CD4-positive, alpha-beta T cell (primary cell): ENCODE measurements at regions of chr12 and their contacts with region 1.

Region 1: DNA sequence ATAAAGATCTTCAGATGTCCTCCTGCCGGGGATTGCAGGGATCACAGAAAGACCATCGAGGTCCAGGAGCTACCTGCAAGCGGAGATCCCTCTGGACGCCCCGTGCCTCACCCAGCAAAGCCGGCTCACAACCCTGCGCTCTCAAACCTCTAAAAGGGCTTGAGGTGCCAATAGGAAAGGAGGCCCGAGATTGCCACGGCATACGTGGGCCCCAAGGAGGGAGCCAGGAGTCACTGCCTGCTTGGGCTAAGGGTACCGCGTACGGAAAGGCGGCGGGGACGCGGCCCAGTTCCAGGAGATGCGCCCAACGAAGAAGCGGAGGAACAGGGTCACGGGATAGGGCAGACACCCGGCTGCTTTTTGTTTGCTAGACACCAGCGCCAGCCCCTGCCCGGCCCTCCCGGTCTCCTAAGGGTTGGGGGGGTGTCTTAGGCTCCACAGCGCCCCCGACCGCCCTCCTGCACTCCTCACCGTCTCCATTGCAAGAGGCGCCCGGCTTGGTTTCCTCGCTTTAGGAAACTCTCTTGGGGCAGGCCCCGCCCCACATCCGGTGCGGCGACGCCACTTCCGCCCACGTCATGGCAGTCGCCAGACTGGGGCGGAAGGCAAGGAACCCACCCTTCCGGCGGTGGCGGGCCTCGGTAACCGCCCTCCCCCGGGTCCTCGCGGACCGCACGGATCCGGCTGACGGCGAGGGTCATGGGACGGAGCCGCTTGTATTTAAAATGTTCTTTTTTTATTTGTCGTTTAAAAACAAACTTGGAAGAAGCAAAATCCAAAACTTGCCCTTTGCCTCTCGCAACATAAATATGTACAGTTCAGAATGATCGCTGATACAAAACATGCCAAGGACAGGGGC is at the start of gene PRKAG1:
- DNase-seq: peak; percentile 94 to 99 (median 96)
- ATAC-seq: peak; percentile 90
- H3K4me3 ChIP-seq: peak within 1 kb of the TSS; percentile 73
- H3K4me3 Mint-ChIP-seq: peak within 1 kb of the TSS; percentile 97
- H3K27ac ChIP-seq: peak within 1 kb of the TSS; percentile 94 to 97
- H3K27ac Mint-ChIP-seq: peak within 1 kb of the TSS; percentile 99
- H3K4me1 ChIP-seq: peaks cover 27% of the 10 kb centered on the region
- H3K4me1 Mint-ChIP-seq: peaks cover 50% of the 10 kb centered on the region
- H3K27me3 ChIP-seq: no peaks in the 10 kb centered on the region
- H3K27me3 Mint-ChIP-seq: no peaks in the 10 kb centered on the region
- CTCF ChIP-seq: peak; percentile 60
- total RNA-seq, gene PRKAG1: 34.6 to 38.2 TPM

Region 2: DNA sequence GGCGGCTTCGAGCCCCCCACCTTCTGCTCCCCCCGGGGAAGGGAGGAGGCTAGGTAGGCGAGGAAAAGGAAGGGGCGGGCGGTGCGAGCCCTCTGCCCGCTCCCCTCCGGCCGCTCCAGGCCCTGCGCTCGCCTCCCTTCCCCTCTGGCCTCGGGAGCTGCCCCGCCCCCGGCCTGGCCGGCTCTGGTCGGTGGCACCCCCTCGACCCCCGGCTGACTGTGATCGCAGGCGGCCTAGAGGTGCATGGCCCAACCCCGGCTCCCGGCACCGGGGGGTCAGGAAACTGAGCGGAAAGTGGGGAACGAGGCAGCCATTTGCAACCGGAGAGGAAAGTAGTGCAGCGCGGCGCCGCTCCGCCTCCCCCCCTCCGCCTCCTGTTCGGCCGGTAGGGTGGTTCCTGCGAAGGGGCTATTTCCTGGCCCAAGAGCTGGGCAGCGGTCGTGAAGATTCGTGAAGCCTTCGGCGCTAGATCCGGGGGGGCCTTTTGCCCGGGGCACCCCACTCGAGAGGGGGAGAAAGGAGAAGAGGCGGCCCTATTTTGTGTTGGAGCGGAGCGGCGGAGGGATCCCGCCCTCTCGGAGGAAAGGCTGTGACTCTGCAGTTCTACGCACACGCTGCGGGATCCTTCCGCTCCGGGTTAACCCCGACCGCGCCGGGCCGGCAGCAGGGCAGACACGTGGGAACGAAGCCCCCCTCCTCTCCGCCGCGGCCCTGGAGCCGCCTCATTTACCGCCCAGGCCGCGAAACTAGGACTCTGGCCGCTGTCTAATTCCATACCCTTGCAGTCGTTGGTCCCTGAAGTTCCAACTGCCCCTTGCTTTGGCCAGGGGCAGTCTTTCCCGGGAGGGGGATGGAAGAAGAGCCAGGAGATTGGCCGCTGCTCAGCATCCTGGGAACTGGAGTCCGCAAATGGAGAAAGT is 42.0 kb after region 1 on chr12 and contains the start of gene KMT2D:
- CTCF ChIA-PET with region 1: interaction called, 4 read pairs
- POLR2A ChIA-PET with region 1: interaction called, 4 read pairs
- intact Hi-C with region 1: loop called (anchors 2 kb)
- DNase-seq: peak; percentile 78 to 95 (median 86)
- ATAC-seq: peak; percentile 68
- H3K4me3 ChIP-seq: peak within 1 kb of the TSS; percentile 96
- H3K4me3 Mint-ChIP-seq: peak within 1 kb of the TSS; percentile 97
- H3K27ac ChIP-seq: peak within 1 kb of the TSS; percentile 90 to 93
- H3K27ac Mint-ChIP-seq: peak within 1 kb of the TSS; percentile 96
- H3K4me1 ChIP-seq: peaks cover 56% of the 10 kb centered on the region
- H3K4me1 Mint-ChIP-seq: peaks cover 55% of the 10 kb centered on the region
- H3K27me3 ChIP-seq: no peaks in the 10 kb centered on the region
- H3K27me3 Mint-ChIP-seq: no peaks in the 10 kb centered on the region
- CTCF ChIP-seq: no peak
- total RNA-seq, gene KMT2D: 107 to 110 TPM